HepG2 (cell line): ENCODE measurements at regions of chr7 and their contacts with region 1.

Region 1: DNA sequence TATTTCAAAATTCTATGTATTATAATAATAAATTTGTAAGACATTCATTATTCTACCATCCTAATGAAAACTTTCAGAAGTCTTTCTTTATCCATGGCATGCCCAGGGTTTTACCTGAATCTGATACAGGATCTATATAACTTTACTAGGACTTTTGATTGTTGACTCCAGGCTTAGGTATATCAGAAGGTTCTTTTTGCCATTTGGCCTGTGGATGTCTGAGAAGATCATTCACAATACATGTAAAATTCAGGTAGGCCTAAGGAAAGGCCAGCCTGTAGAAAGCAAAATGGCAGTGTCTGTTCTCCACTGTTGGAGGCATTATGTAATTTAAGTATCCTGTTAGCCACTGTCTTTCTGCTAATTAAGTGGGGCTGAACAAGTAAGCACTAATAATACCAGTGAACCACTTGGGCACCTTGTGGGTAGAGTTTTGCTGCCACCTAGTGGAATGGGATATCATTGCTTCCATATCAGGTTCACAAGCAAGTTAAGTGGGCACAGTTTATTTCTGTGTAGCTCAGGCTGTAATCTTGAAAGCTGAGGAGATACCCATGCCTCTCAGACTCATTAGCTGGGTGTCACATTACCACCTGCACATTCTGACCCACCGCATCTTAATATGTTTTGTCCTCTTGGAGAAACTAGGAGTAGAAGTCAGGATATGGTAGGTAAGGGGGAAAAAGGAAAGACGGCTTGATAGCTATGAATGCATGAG is 105.5 kb downstream of the SEPTIN7 start:
- DNase-seq: peak; percentile 69
- ATAC-seq: peak; percentile 94
- H3K4me3 ChIP-seq: no peak overlapping the region
- H3K27ac ChIP-seq: no peak overlapping the region
- H3K4me1 ChIP-seq: no peaks in the 10 kb centered on the region
- H3K27me3 ChIP-seq: no peaks in the 10 kb centered on the region
- CTCF ChIP-seq: peak; percentile 91
- EP300 ChIP-seq: no peak
- POLR2A ChIP-seq: no peak
- RAD21 ChIP-seq: peak; percentile 79

Region 2: DNA sequence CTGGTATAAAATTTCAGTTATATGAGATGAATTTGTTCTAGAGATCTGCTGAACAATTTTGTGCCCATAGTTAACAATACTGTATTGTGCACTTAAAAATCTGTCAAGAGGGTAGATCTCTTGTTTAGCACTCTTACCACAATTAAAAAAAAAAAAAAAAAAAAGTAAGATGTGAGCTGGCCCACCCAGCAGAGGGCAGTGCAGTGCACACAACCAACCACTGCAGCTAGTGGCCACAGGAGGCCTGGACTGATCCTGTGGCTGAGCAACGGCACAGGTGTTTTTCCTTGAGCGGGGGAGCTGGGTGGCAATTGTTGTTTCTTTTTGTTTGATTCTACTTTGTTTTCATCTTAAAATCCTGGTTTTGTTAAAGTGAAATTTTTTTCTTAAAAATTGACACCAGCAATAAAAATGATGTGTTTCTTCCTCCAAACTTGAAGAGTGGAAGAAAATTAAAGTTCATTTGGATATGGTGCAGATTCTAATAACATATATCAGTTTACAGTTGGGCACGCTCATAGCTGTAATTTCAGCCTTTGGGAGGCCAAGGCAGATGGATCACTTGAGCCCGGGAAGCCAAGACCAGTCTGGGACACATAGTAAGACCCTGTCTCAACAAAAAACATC is 481.4 kb before region 1 on chr7:
- CTCF ChIA-PET with region 1: no interaction called
- POLR2A ChIA-PET with region 1: no interaction called
- in situ Hi-C with region 1: no loop called
- intact Hi-C with region 1: loop called (anchors 10 kb)
- DNase-seq: peak; percentile 41
- ATAC-seq: peak; percentile 94
- H3K4me3 ChIP-seq: no peak overlapping the region
- H3K27ac ChIP-seq: no peak overlapping the region
- H3K4me1 ChIP-seq: no peaks in the 10 kb centered on the region
- H3K27me3 ChIP-seq: peaks cover 0 to 2% of the 10 kb centered on the region in 2 experiments; a peak in 1 of 5 replicates
- CTCF ChIP-seq: peak; percentile 73
- EP300 ChIP-seq: no peak
- POLR2A ChIP-seq: no peak
- RAD21 ChIP-seq: no peak

Region 3: DNA sequence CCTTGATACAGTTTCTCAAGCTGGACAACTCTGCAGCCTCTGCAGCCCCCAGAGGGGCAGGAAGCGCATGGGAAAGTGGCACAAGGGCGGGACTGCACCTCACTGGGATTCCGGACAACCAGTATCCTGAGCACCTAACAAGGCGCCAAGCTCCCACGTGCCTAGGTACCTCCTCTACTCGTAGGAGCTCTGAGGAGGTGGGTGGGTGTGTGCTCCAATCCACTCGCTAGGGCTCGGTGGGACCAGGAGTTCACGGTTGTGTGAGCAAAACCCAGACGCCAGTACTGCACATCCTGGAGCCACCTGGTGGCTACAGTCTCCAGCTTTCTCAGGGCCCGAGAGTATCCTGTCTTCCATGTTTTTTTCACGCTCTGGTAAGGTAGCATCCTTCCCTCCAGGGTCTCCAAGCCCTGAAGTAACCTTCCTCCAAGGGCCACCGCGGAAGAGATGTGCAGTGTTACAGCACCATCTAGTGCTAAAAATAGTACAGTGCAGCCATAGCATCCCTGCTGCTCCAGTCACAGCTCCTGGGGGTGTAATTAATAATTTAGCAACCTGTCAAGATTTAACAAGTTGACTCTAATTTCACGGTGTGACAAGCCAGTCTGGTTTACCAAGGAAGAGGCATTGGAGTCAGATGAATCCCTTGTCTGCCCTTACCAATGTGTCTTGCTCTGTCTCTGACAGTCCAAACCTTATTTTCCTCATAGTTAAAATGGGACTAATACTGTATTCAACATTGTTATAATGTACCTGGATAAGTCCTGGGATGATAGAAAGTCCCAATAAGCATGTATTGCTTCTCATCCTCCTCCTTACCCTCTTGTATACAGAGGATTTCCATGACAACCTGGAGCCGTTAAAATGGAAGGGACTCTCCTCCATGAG is 281.8 kb before region 1 on chr7:
- CTCF ChIA-PET with region 1: no interaction called
- POLR2A ChIA-PET with region 1: no interaction called
- in situ Hi-C with region 1: no loop called
- intact Hi-C with region 1: loop called (anchors 10 kb)
- DNase-seq: peak; percentile 31
- ATAC-seq: peak; percentile 93
- H3K4me3 ChIP-seq: peak overlapping the region in 1 of 3 experiments; percentile 17; a peak in 1 of 6 replicates
- H3K27ac ChIP-seq: no peak overlapping the region
- H3K4me1 ChIP-seq: peaks cover 7% of the 10 kb centered on the region
- H3K27me3 ChIP-seq: no peaks in the 10 kb centered on the region
- CTCF ChIP-seq: peak; percentile 87
- EP300 ChIP-seq: no peak
- POLR2A ChIP-seq: no peak
- RAD21 ChIP-seq: peak; percentile 77

Region 4: DNA sequence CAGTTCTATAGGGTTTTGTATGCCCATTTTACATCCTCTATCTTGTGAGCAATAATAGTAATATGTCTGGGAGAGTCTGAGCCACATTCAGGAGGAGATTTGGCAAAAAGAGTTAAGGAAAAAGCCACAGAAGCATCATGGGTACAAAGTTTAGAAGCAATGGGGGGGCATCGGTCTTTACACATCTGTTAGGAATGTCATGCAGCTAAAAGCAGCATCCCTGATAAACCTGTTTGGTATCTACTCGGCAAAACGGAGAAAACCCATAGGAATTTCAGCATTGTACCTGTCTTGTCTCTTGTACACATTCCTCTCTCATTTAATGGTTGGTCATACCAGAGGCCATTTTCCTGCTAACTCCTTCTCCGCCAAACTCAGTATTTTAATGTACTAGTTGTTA is 198.9 kb before region 1 on chr7:
- CTCF ChIA-PET with region 1: interaction called, 34 read pairs
- POLR2A ChIA-PET with region 1: no interaction called
- in situ Hi-C with region 1: loop called (anchors 5 kb)
- intact Hi-C with region 1: loop called (anchors 1 kb)
- DNase-seq: no peak
- ATAC-seq: no peak
- H3K4me3 ChIP-seq: no peak overlapping the region
- H3K27ac ChIP-seq: no peak overlapping the region
- H3K4me1 ChIP-seq: peaks cover 14% of the 10 kb centered on the region
- H3K27me3 ChIP-seq: no peaks in the 10 kb centered on the region
- CTCF ChIP-seq: no peak
- EP300 ChIP-seq: no peak
- POLR2A ChIP-seq: no peak
- RAD21 ChIP-seq: no peak

Region 5: DNA sequence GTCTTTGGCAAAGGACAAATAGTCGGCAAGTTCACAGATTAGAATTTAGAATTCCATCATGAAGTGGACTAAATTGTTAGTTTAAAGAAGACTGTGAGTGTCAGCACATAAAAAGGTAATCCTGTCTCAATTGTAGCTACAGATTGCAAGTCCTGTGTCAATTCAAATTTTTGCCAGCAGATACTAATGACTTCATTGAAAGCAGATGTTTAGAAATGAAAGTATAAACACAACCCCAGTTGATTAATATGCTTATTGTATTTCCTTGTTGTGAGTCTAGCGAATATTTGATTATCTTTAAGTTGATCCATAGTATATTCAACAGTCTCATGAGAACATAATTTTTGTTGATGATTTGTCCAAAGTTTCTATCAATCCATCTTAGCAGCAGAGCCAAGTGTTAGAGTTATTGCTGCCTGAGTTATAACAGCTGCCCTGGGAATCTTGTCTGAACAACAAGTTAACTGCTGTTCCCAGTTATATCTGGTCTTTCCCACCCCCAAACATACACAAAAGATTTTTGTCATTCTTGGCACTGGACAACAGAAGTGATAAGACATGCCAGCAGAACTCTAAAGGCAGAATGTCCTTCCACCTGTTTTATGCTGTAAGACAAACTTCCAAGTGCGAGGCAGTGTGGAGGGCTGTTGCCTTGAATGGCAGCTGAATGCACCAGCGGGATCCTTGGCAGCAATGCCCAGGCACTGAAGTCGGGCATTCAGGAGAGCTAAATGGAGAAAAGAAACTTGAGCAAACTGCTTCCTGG is 190.1 kb before region 1 on chr7:
- CTCF ChIA-PET with region 1: interaction called, 4 read pairs
- POLR2A ChIA-PET with region 1: no interaction called
- in situ Hi-C with region 1: loop called (anchors 5 kb)
- intact Hi-C with region 1: no loop called
- DNase-seq: no peak
- ATAC-seq: no peak
- H3K4me3 ChIP-seq: no peak overlapping the region
- H3K27ac ChIP-seq: no peak overlapping the region
- H3K4me1 ChIP-seq: peaks cover 43% of the 10 kb centered on the region
- H3K27me3 ChIP-seq: no peaks in the 10 kb centered on the region
- CTCF ChIP-seq: no peak
- EP300 ChIP-seq: no peak
- POLR2A ChIP-seq: no peak
- RAD21 ChIP-seq: no peak

Region 6: DNA sequence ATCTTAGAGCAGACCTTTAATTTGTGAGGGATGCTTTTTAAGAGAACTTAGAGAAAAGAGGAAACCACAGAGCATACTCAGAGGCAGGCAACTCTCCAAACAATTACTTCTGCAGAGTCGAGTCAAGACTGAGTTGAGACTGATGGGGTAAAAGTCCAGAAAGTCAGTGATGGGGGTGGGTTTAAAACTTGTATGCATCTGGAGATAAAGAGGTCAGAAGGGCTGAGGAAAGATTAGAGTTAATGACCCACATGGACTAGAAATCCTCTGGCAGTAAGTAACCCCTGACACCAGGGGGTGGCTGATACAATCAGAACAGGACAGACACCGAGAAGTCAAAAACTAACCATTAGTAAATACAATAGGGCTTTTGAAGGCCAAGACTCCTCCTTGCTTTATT is 147.9 kb before region 1 on chr7:
- CTCF ChIA-PET with region 1: interaction called, 3 read pairs
- POLR2A ChIA-PET with region 1: no interaction called
- in situ Hi-C with region 1: no loop called
- intact Hi-C with region 1: loop called (anchors 1 kb)
- DNase-seq: peak; percentile 28
- ATAC-seq: peak; percentile 85
- H3K4me3 ChIP-seq: no peak overlapping the region
- H3K27ac ChIP-seq: no peak overlapping the region
- H3K4me1 ChIP-seq: peaks cover 26% of the 10 kb centered on the region
- H3K27me3 ChIP-seq: no peaks in the 10 kb centered on the region
- CTCF ChIP-seq: peak; percentile 27; the same call in 1 of the 2 replicates
- EP300 ChIP-seq: no peak
- POLR2A ChIP-seq: no peak
- RAD21 ChIP-seq: no peak

Region 7: GRCh38 chr7:35975851-35976454 is 69.6 kb after region 1 on chr7:
- CTCF ChIA-PET with region 1: no interaction called
- POLR2A ChIA-PET with region 1: no interaction called
- in situ Hi-C with region 1: loop called (anchors 10 kb)
- intact Hi-C with region 1: no loop called
- DNase-seq: peak; percentile 68
- ATAC-seq: peak; percentile 79
- H3K4me3 ChIP-seq: no peak overlapping the region
- H3K27ac ChIP-seq: no peak overlapping the region
- H3K4me1 ChIP-seq: peaks cover 4% of the 10 kb centered on the region; the same call in 1 of the 2 replicates
- H3K27me3 ChIP-seq: peaks cover 4 to 9% of the 10 kb centered on the region in 2 experiments; a peak in 3 of 5 replicates
- CTCF ChIP-seq: peak; percentile 84
- EP300 ChIP-seq: no peak
- POLR2A ChIP-seq: no peak
- RAD21 ChIP-seq: peak; percentile 48; the same call in 1 of the 2 replicates